ENCODE measurements at regions of chr18 and their contacts with region 1.

Region 1: GRCh38 chr18:2932247-2933181 is 80.4 kb downstream of the LPIN2 start:
- DNase-seq: peak; percentile 77
- H3K4me3 ChIP-seq: no peak overlapping the region
- H3K27ac ChIP-seq: no peak overlapping the region
- H3K4me1 ChIP-seq: peaks cover 21% of the 10 kb centered on the region
- H3K27me3 ChIP-seq: no peaks in the 10 kb centered on the region

Region 2: GRCh38 chr18:2826581-2826980 is 105.9 kb before region 1 on chr18:
- in situ Hi-C with region 1: no loop called
- DNase-seq: peak; percentile 69
- H3K4me3 ChIP-seq: no peak overlapping the region
- H3K27ac ChIP-seq: peak overlapping the region; percentile 52
- H3K4me1 ChIP-seq: peaks cover 11% of the 10 kb centered on the region
- H3K27me3 ChIP-seq: no peaks in the 10 kb centered on the region

Region 3: DNA sequence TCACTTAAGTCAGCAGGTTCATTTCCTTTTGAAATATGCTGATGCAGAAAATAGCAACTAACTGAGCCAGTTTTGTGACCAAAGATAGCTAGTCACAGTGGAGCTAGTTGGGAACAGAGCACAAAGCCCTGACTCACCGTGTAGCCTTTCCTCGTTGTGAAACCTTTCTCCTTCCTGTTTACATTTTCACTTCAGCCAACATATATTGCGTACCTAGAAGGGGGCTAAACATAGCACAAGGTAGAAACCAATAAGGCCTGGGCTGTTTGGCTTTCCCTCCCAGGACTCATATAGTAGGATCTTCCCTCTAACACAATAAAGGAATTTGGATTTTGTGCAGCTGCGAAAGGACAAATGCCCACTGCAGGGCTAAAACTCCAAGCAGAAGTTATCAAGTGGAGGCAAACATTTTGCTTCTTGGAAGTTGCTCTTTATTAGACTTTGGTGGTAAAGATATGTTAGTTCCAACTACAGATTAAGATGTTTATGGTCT is 105.0 kb after region 1 on chr18:
- in situ Hi-C with region 1: loop called (anchors 25 kb)
- DNase-seq: peak; percentile 84
- H3K4me3 ChIP-seq: no peak overlapping the region
- H3K27ac ChIP-seq: peak overlapping the region; percentile 7; the same call in 1 of the 2 replicates
- H3K4me1 ChIP-seq: peaks cover 8% of the 10 kb centered on the region; the same call in 1 of the 2 replicates
- H3K27me3 ChIP-seq: no peaks in the 10 kb centered on the region

Region 4: GRCh38 chr18:3151399-3152264 is 219.1 kb after region 1 on chr18:
- in situ Hi-C with region 1: loop called (anchors 10 kb)
- DNase-seq: peak; percentile 62
- H3K4me3 ChIP-seq: no peak overlapping the region
- H3K27ac ChIP-seq: no peak overlapping the region
- H3K4me1 ChIP-seq: peaks cover 8% of the 10 kb centered on the region; the same call in 1 of the 2 replicates
- H3K27me3 ChIP-seq: no peaks in the 10 kb centered on the region

Measured in GM23248 (cell line).